Activated CD8-positive, alpha-beta T cell treated with anti-CD3 and anti-CD28 coated beads for 36 hours (primary cell): ENCODE measurements at regions of chr7 and their contacts with region 1.

Region 1: GRCh38 chr7:81469869-81470723 is 299.8 kb downstream of the HGF start:
- DNase-seq: peak; percentile 45
- ATAC-seq: no peak
- H3K4me3 Mint-ChIP-seq: no peak overlapping the region
- H3K27ac Mint-ChIP-seq: no peak overlapping the region
- H3K4me1 Mint-ChIP-seq: no peaks in the 10 kb centered on the region
- H3K27me3 Mint-ChIP-seq: no peaks in the 10 kb centered on the region
- CTCF ChIP-seq: peak; percentile 56

Region 2: GRCh38 chr7:80699045-80699638 is 771.0 kb before region 1 on chr7:
- CTCF ChIA-PET with region 1: no interaction called
- POLR2A ChIA-PET with region 1: no interaction called
- intact Hi-C with region 1: loop called (anchors 2 kb)
- DNase-seq: no peak
- ATAC-seq: peak; percentile 42
- H3K4me3 Mint-ChIP-seq: no peak overlapping the region
- H3K27ac Mint-ChIP-seq: no peak overlapping the region
- H3K4me1 Mint-ChIP-seq: no peaks in the 10 kb centered on the region
- H3K27me3 Mint-ChIP-seq: no peaks in the 10 kb centered on the region
- CTCF ChIP-seq: peak; percentile 78

Region 3: GRCh38 chr7:81482600-81483186 is 12.6 kb after region 1 on chr7:
- CTCF ChIA-PET with region 1: interaction called, 13 read pairs
- POLR2A ChIA-PET with region 1: no interaction called
- intact Hi-C with region 1: no loop called
- DNase-seq: no peak
- ATAC-seq: no peak
- H3K4me3 Mint-ChIP-seq: no peak overlapping the region
- H3K27ac Mint-ChIP-seq: no peak overlapping the region
- H3K4me1 Mint-ChIP-seq: no peaks in the 10 kb centered on the region
- H3K27me3 Mint-ChIP-seq: no peaks in the 10 kb centered on the region
- CTCF ChIP-seq: peak; percentile 64